Heart right ventricle (tissue), 16 donors: ENCODE measurements at regions of chr11 and their contacts with region 1.

Region 1: DNA sequence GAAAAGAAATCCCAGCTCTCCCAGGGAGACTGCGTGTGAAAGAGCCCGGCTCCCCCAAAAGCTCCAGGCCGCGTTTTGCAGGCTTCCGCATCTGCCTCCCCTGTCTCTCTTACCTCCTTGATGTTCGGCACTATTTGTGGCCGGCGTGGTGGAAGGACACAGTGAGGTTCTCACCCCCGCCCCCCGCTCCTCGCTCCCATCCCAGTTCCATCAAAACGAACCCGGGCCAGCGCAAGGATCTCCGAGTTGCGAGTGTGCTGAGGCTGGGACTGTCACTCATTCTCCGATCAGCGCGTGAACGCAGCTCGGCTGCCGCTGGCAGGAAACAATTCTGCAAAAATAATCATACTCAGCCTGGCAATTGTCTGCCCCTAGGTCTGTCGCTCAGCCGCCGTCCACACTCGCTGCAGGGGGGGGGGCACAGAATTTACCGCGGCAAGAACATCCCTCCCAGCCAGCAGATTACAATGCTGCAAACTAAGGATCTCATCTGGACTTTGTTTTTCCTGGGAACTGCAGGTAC is at the start of gene NCAM1:
- DNase-seq: peak; percentile 85 to 88
- ATAC-seq: peak; percentile 35 to 79 (median 69)
- H3K4me3 ChIP-seq: peak within 1 kb of the TSS; percentile 29 to 78 (median 64)
- H3K27ac ChIP-seq: peak within 1 kb of the TSS; percentile 49 to 88 (median 80)
- H3K4me1 ChIP-seq: peaks cover 0 to 34% (median 11%) of the 10 kb centered on the region in 9 donors
- H3K27me3 ChIP-seq: peaks cover 0 to 98% (median 35%) of the 10 kb centered on the region in 7 donors
- CTCF ChIP-seq: no peak
- total RNA-seq, gene NCAM1: 220 to 454 (median 338) TPM

Region 2: DNA sequence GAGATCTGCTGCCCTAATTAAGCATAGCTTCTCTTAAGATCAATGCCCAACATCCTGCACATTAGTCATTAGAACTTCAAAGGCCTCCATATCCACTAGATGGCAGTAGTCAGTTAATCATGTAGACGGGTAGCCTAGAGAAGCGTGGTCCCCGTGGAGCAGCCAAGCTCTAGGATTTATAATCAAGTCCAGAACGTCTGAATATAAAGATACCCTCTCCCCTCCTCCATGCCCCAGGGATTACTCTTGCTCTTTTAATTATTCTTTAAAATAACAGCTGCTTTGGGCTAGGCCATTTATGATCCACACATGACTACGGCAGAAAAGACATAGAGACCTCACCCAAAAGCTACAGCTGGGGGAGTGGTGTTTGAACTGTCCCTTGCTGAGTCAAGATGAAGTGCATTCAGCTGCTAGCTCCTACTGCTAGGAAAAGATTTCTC is 372.9 kb before region 1 on chr11:
- intact Hi-C with region 1: loop called in 4 of 10 experiments (anchors 5 to 10 kb)
- DNase-seq: peak; percentile 38 to 64
- ATAC-seq: peak; percentile 52 to 87 (median 82)
- H3K4me3 ChIP-seq: no peak overlapping the region
- H3K27ac ChIP-seq: no peak overlapping the region
- H3K4me1 ChIP-seq: peaks cover 0 to 11% (median 0%) of the 10 kb centered on the region in 9 donors
- H3K27me3 ChIP-seq: peaks cover 0 to 4% (median 0%) of the 10 kb centered on the region in 7 donors
- CTCF ChIP-seq: peak; percentile 54 to 84 (median 73)

Region 3: DNA sequence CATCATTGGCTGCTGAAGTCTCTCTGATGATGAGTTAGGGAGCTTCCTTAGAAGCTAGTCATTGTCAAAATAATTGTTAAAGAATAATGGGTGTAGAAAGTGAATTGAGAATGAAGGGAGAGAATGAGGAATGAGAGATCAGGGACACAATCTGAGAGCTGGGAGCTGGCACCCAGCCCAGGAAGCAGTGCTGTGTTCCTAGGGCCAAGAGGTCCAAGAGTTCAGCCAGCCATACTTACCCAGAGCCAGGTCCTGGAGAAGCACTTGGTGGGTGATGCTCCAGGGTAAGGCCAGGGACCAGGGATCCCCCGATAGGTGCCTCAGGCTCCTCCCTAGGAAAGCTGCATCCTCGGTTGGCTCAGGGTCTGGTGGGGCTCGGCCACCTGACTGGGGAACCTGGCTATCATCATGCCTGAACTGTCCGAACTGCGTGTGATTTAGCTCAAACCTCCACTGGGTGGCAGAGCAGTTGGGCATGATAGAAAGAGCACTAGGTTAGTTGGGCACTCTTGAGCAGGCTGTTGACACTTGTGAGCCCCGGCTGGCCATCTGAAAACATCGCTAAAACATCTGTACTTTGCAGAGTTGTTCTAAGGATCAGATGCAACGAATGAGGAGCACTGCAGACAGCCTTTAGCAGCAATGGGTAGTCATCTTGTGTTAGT is 123.9 kb before region 1 on chr11:
- intact Hi-C with region 1: loop called in 4 of 10 experiments (anchors 2 to 10 kb)
- DNase-seq: peak; percentile 10 to 45
- ATAC-seq: peak; percentile 49 to 65 (median 63)
- H3K4me3 ChIP-seq: no peak overlapping the region
- H3K27ac ChIP-seq: peak overlapping the region in 1 of 10 donors; percentile 19
- H3K4me1 ChIP-seq: peaks cover 0 to 24% (median 10%) of the 10 kb centered on the region in 9 donors
- H3K27me3 ChIP-seq: no peaks in the 10 kb centered on the region
- CTCF ChIP-seq: peak in 7 of 9 donors; percentile 25 to 58 (median 43)

Region 4: GRCh38 chr11:112864672-112865071 is 96.5 kb before region 1 on chr11:
- intact Hi-C with region 1: loop called in 1 of 10 experiments (anchors 10 kb)
- DNase-seq: no peak
- ATAC-seq: peak in 7 of 8 donors; percentile 43 to 84 (median 70)
- H3K4me3 ChIP-seq: no peak overlapping the region
- H3K27ac ChIP-seq: peak overlapping the region in 4 of 10 donors; percentile 42 to 75 (median 70)
- H3K4me1 ChIP-seq: peaks cover 0 to 21% (median 11%) of the 10 kb centered on the region in 9 donors
- H3K27me3 ChIP-seq: no peaks in the 10 kb centered on the region
- CTCF ChIP-seq: no peak

Region 5: GRCh38 chr11:113103932-113104690 is 142.9 kb after region 1 on chr11:
- intact Hi-C with region 1: loop called in 1 of 10 experiments (anchors 2 kb)
- DNase-seq: no peak
- ATAC-seq: peak in 5 of 8 donors; percentile 43 to 78 (median 52)
- H3K4me3 ChIP-seq: no peak overlapping the region
- H3K27ac ChIP-seq: peak overlapping the region in 9 of 10 donors; percentile 39 to 83 (median 75)
- H3K4me1 ChIP-seq: peaks cover 0 to 52% (median 17%) of the 10 kb centered on the region in 9 donors
- H3K27me3 ChIP-seq: peaks cover 0 to 4% (median 0%) of the 10 kb centered on the region in 7 donors
- CTCF ChIP-seq: no peak

Region 6: DNA sequence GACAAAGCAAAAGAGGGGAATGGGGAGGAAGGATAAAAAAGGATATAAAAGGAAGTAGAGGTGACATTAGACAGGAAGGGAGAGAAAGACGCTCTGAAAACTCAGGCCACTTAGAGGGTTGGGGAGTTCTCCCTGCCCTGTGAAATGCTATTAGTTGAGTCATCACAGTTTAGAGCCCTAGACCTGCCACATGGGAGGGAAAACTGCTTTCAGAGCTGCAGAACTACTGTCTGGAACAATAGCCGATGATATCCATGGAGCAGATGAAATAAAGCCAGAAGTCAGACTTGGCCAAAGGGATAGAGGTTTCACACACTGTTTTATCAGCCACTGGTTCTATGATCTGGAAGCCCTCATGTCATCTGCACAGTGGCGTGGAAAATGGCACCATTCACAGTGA is 157.9 kb after region 1 on chr11:
- intact Hi-C with region 1: loop called in 5 of 10 experiments (anchors 2 to 5 kb)
- DNase-seq: peak in 1 of 2 donors; percentile 10
- ATAC-seq: peak in 6 of 8 donors; percentile 36 to 83 (median 76)
- H3K4me3 ChIP-seq: no peak overlapping the region
- H3K27ac ChIP-seq: peak overlapping the region in 6 of 10 donors; percentile 25 to 60 (median 54)
- H3K4me1 ChIP-seq: peaks cover 0 to 58% (median 26%) of the 10 kb centered on the region in 9 donors
- H3K27me3 ChIP-seq: peaks cover 0 to 3% (median 0%) of the 10 kb centered on the region in 7 donors
- CTCF ChIP-seq: no peak